ENCODE measurements at regions of chr17 and their contacts with region 1.

Region 1: DNA sequence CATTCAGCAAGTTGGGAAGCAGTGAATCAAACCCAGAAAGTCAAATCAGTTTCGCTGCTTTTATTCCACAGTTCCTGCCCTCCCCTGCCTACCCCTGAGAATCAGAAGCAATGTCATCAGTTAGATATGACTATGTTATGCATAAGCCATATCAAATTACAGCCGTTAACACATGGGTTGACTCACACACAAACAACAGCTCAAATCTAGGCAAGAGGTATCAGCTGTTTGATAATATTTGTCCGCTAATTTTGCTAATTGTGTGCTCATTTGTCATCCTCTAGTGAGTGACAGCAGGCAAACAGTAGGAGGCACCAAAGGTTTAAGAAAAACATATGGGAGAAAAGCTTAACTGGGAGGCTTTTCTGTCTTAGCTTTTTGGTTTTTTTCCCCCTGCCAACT is 327.4 kb upstream of the CCL2 start:
- DNase-seq: no peak
- ATAC-seq: no peak
- H3K4me3 ChIP-seq: no peak overlapping the region
- H3K27ac ChIP-seq: no peak overlapping the region
- H3K4me1 ChIP-seq: no peaks in the 10 kb centered on the region
- H3K27me3 ChIP-seq: no peaks in the 10 kb centered on the region
- CTCF ChIP-seq: peak in 1 of 5 experiments; percentile 31
- POLR2A ChIP-seq: no peak

Region 2: DNA sequence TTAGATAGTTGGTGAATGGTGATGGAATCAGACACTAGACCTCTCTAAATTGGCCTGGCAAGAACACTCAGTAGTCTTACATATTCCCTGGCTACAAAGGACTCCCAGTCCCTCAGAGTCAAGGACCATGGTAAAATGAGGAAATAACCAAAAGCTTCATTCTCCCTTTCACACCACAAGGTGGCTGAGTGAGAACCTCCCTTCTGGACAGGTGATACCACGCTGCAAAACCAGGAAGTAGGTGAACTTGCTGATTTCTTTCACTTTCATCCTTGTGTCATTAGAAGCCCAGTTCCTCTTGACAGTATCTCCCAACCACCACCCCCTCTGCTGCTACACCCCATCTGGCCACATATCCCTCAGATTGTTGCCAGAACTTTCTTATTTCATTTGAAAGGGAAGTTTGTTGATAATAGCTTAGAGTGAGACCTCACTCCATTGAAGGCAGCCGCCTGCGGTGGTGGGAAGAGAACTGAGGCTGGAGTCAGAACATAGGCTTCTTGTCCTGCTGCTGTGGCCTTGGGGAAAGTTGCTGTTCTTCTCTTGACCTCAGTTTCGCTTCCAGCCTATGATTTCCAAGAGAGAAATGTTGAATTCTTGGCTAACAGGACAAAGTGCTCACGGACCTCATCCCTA is 36.7 kb after region 1 on chr17:
- in situ Hi-C with region 1: no loop called
- intact Hi-C with region 1: no loop called
- DNase-seq: no peak
- ATAC-seq: no peak
- H3K4me3 ChIP-seq: no peak overlapping the region
- H3K27ac ChIP-seq: peak overlapping the region in 1 of 4 donors; percentile 15
- H3K4me1 ChIP-seq: peaks cover 0 to 6% of the 10 kb centered on the region in 2 donors
- H3K27me3 ChIP-seq: no peaks in the 10 kb centered on the region
- CTCF ChIP-seq: no peak
- POLR2A ChIP-seq: no peak

Region 3: DNA sequence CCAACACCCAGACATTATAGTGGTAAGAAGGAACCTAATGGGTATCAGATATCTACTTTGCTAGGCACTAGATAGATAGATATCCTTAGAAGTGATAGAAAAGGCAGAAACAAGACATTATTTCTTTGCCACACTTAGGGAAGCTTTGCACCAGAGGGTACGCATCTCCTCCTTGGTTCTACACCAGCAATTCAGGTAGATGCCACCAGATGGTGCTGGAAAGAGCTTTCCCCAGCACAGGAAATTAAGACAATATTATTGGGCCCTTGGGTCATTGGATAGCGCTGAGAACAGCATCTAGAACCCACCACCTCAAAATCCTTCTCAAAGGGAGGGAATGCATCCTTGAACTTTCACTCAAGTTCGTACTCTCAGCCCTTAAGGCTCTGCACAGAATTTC is 153.5 kb after region 1 on chr17:
- in situ Hi-C with region 1: loop called in 1 of 4 experiments (anchors 25 kb)
- intact Hi-C with region 1: no loop called
- DNase-seq: no peak
- ATAC-seq: no peak
- H3K4me3 ChIP-seq: no peak overlapping the region
- H3K27ac ChIP-seq: no peak overlapping the region
- H3K4me1 ChIP-seq: no peaks in the 10 kb centered on the region
- H3K27me3 ChIP-seq: no peaks in the 10 kb centered on the region
- CTCF ChIP-seq: no peak
- POLR2A ChIP-seq: no peak

Region 4: GRCh38 chr17:34146440-34147043 is 218.8 kb after region 1 on chr17:
- in situ Hi-C with region 1: loop called in 1 of 4 experiments (anchors 25 kb)
- intact Hi-C with region 1: loop called (anchors 5 kb)
- DNase-seq: no peak
- ATAC-seq: peak in 1 of 2 donors; percentile 39
- H3K4me3 ChIP-seq: no peak overlapping the region
- H3K27ac ChIP-seq: no peak overlapping the region
- H3K4me1 ChIP-seq: no peaks in the 10 kb centered on the region
- H3K27me3 ChIP-seq: peaks cover 0 to 3% (median 0%) of the 10 kb centered on the region in 3 donors
- CTCF ChIP-seq: peak in 3 of 5 experiments; percentile 13 to 51 (median 27)
- POLR2A ChIP-seq: no peak